Sigmoid colon (tissue), 7 donors: ENCODE measurements at regions of chr11 and their contacts with region 1.

Region 1: GRCh38 chr11:101914738-101915426 is at the start of gene CEP126:
- DNase-seq: peak; percentile 97
- H3K4me3 ChIP-seq: peak within 1 kb of the TSS; percentile 68 to 82 (median 71)
- H3K27ac ChIP-seq: peak within 1 kb of the TSS; percentile 83 to 86 (median 84)
- H3K4me1 ChIP-seq: peaks cover 0 to 25% (median 14%) of the 10 kb centered on the region in 4 donors
- H3K27me3 ChIP-seq: no peaks in the 10 kb centered on the region
- CTCF ChIP-seq: peak; percentile 16 to 36 (median 28)
- EP300 ChIP-seq: peak in 1 of 4 donors; percentile 39
- POLR2A ChIP-seq: peak in 1 of 2 donors; percentile 17
- total RNA-seq, gene CEP126: 3.7 to 15.5 (median 8.3) TPM

Region 2: DNA sequence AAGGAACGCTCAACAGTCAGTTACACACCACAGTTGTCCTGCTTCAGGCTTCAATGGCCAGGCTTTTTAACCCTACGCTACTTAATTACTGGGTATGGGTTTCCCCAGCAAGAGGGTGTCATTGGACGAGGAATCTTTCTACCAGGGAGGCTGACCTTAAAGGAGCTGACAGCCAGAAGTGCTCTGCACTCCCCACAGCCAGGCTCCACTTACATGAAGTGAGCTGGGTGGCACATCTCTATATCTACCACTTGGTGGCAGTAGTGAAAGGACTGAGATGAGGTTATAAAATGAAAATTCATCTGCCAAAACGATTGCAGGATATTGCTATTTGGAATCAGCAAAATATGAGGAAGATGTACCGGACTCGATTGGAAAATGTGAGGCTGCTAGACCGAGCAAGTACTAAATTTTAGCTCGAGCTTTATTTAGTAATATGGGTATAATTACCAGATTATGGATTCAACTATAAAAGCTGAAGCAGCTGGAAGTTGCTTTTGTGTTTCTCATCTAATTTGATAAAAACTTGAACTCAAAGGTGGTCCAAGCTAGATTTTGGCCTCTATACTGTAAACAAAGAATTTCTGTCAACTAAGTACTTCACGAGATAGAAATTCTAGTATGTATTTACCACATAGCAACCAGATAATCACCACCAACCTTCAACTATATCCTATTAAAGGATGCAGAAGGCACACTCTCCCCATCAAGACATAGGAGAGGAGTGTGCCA is 54.0 kb before region 1 on chr11:
- intact Hi-C with region 1: loop called (anchors 2 kb)
- DNase-seq: no peak
- H3K4me3 ChIP-seq: no peak overlapping the region
- H3K27ac ChIP-seq: no peak overlapping the region
- H3K4me1 ChIP-seq: peaks cover 0 to 19% (median 8%) of the 10 kb centered on the region in 4 donors
- H3K27me3 ChIP-seq: no peaks in the 10 kb centered on the region
- CTCF ChIP-seq: peak; percentile 30 to 83 (median 62)
- EP300 ChIP-seq: no peak
- POLR2A ChIP-seq: no peak

Region 3: DNA sequence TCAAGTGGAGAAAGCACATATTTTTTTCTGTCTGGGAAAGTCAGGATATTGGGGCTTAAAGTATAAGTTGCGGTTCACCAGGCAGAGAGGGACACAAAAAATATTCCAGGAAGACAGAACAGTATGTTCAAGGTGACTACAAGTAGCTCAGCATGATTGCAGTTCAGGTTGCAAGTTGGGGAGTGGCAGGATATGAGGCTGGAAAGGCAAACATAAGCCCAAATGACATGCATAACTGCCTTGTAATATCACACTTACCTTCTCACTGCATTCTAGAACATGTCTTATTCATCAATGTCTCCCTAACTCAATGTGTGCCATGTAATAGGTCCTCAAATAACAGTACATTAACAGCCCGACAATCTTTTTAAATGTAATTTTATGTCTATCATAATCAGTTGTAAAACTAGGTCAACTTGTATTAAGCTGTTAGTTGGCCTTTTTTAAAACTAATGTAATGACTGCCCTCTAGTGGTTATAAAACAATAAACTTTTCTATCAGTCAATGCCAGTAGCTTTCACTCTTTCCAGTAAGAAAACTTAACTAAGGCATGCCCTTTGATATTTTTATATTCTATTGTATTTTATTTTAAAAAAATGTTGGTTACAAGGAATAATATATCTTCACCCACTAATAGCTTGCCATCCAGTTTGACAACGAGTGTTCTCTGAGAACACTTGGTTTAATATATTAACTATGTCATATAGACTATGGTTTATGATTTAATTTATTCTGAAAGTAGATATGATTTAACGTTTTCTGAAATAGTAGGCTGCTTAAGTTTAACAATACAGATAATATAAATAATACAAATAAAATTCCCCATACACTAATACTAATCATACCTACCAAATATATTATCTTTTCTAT is 92.9 kb after region 1 on chr11:
- intact Hi-C with region 1: loop called (anchors 5 kb)
- DNase-seq: no peak
- H3K4me3 ChIP-seq: no peak overlapping the region
- H3K27ac ChIP-seq: peak overlapping the region in 1 of 4 donors; percentile 45
- H3K4me1 ChIP-seq: peaks cover 0 to 12% (median 2%) of the 10 kb centered on the region in 4 donors
- H3K27me3 ChIP-seq: no peaks in the 10 kb centered on the region
- CTCF ChIP-seq: peak in 2 of 4 experiments; percentile 38 to 59
- EP300 ChIP-seq: no peak
- POLR2A ChIP-seq: no peak